ENCODE measurements at regions of chr2 and their contacts with region 1.

Region 1: DNA sequence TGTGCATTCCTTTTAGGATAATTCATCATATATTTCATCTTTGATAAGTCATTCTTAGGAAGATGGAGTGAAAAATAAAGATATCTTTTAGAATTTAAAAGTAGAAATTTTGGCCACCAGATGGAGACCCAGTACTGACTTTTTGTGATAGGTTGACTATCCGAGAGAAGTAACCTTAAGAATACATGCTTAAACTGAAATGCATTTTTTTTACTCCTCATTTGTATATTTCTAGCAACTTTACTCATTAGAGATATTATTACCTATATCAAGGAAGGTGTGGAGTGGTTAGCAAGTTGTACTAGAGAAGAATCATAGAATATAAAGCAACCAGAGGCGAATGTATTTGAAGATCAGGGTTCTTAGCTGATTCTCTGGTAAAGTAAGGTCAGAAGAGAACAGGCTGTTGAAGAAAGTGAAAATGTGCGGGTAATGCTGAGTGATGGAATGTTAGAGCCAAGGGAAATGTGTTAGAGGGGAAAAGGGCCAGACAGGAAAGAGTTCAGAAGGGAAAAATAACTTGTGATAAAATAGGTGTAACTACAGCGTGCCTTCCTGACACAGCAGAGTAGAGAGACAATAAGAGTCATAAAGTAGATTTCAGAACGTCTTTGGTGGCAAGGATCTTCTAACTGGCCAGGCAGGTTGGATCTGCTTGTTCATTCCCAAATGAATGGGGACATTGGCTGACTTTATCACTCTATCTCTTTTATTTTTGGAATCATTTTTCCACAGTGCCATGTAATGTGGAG is 52.3 kb downstream of the TDRD15 start:
- DNase-seq: no peak
- H3K4me3 ChIP-seq: no peak overlapping the region
- H3K27ac ChIP-seq: no peak overlapping the region
- H3K4me1 ChIP-seq: no peaks in the 10 kb centered on the region
- H3K27me3 ChIP-seq: no peaks in the 10 kb centered on the region
- CTCF ChIP-seq: peak in 2 of 3 experiments; percentile 39 to 48
- POLR2A ChIP-seq: no peak

Region 2: GRCh38 chr2:21317131-21317530 is 141.1 kb after region 1 on chr2:
- intact Hi-C with region 1: loop called (anchors 10 kb)
- DNase-seq: no peak
- H3K4me3 ChIP-seq: no peak overlapping the region
- H3K27ac ChIP-seq: no peak overlapping the region
- H3K4me1 ChIP-seq: no peaks in the 10 kb centered on the region
- H3K27me3 ChIP-seq: no peaks in the 10 kb centered on the region
- CTCF ChIP-seq: peak; percentile 41 to 63 (median 51)
- POLR2A ChIP-seq: no peak